Heart left ventricle (tissue), 16 donors: ENCODE measurements at regions of chr20 and their contacts with region 1.

Region 1: GRCh38 chr20:38321959-38322598 is 18.1 kb downstream of the BPI start:
- DNase-seq: peak in 3 of 5 donors; percentile 30 to 40 (median 38)
- ATAC-seq: peak in 3 of 4 donors; percentile 50 to 71 (median 55)
- H3K4me3 ChIP-seq: no peak overlapping the region
- H3K27ac ChIP-seq: no peak overlapping the region
- H3K4me1 ChIP-seq: no peaks in the 10 kb centered on the region
- H3K27me3 ChIP-seq: peaks cover 0 to 11% (median 4%) of the 10 kb centered on the region in 9 donors
- CTCF ChIP-seq: peak; percentile 31 to 75 (median 62)
- POLR2A ChIP-seq: no peak

Region 2: GRCh38 chr20:38057351-38057972 is 264.6 kb before region 1 on chr20:
- intact Hi-C with region 1: loop called in 5 of 10 experiments (anchors 10 kb)
- DNase-seq: peak; percentile 80 to 93 (median 84)
- ATAC-seq: peak; percentile 70 to 93 (median 90)
- H3K4me3 ChIP-seq: no peak overlapping the region
- H3K27ac ChIP-seq: peak overlapping the region in 3 of 12 donors; percentile 13 to 42 (median 19)
- H3K4me1 ChIP-seq: peaks cover 0 to 31% (median 9%) of the 10 kb centered on the region in 12 donors
- H3K27me3 ChIP-seq: no peaks in the 10 kb centered on the region
- CTCF ChIP-seq: peak; percentile 85 to 96 (median 91)
- POLR2A ChIP-seq: no peak

Region 3: GRCh38 chr20:38377039-38377710 is 55.1 kb after region 1 on chr20:
- intact Hi-C with region 1: no loop called
- DNase-seq: no peak
- ATAC-seq: no peak
- H3K4me3 ChIP-seq: no peak overlapping the region
- H3K27ac ChIP-seq: no peak overlapping the region
- H3K4me1 ChIP-seq: peaks cover 0 to 13% (median 0%) of the 10 kb centered on the region in 12 donors
- H3K27me3 ChIP-seq: no peaks in the 10 kb centered on the region
- CTCF ChIP-seq: no peak
- POLR2A ChIP-seq: no peak